Endothelial cell of umbilical vein (primary cell): ENCODE measurements at regions of chr14 and their contacts with region 1.

Region 1: GRCh38 chr14:74658537-74659130 is 46.6 kb upstream of the LTBP2 start:
- DNase-seq: peak; percentile 51
- H3K4me3 ChIP-seq: no peak overlapping the region
- H3K27ac ChIP-seq: peak overlapping the region; percentile 86
- H3K4me1 ChIP-seq: peaks cover 32% of the 10 kb centered on the region
- H3K27me3 ChIP-seq: no peaks in the 10 kb centered on the region
- CTCF ChIP-seq: no peak
- POLR2A ChIP-seq: no peak

Region 2: GRCh38 chr14:74333909-74334308 is 324.7 kb before region 1 on chr14:
- CTCF ChIA-PET with region 1: no interaction called
- POLR2A ChIA-PET with region 1: no interaction called
- dilution Hi-C with region 1: no loop called
- intact Hi-C with region 1: no loop called
- DNase-seq: no peak
- H3K4me3 ChIP-seq: no peak overlapping the region
- H3K27ac ChIP-seq: no peak overlapping the region
- H3K4me1 ChIP-seq: no peaks in the 10 kb centered on the region
- H3K27me3 ChIP-seq: peaks cover 7 to 9% of the 10 kb centered on the region in 2 experiments
- CTCF ChIP-seq: no peak
- POLR2A ChIP-seq: no peak

Region 3: DNA sequence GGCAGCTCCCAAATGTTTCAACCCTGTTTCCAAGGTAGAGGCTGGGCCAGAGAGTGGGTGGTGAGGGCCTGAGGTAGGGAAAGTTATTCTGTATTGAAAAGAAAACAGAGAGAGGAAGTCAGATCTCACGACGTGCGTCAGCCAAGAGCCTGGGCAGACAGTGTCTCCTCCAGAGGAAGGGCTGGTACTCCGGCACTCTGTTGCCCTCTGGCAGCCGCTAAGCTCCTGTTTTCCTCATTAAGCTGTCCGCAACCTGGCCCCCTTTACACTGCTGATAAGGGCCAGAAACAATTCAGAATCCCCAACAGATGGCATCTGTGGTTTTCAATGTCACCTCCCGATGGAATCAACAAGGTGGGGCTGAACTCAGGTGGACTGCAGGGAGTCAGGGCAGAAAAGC is 20.6 kb before region 1 on chr14:
- CTCF ChIA-PET with region 1: interaction called, 6 read pairs
- POLR2A ChIA-PET with region 1: no interaction called
- dilution Hi-C with region 1: no loop called
- intact Hi-C with region 1: loop called (anchors 2 kb)
- DNase-seq: peak; percentile 83
- H3K4me3 ChIP-seq: no peak overlapping the region
- H3K27ac ChIP-seq: peak overlapping the region; percentile 88
- H3K4me1 ChIP-seq: peaks cover 20% of the 10 kb centered on the region
- H3K27me3 ChIP-seq: no peaks in the 10 kb centered on the region
- CTCF ChIP-seq: peak; percentile 14 to 26
- POLR2A ChIP-seq: peak; percentile 35

Region 4: GRCh38 chr14:74647678-74648461 is 10.8 kb before region 1 on chr14:
- CTCF ChIA-PET with region 1: interaction called, 5 read pairs
- POLR2A ChIA-PET with region 1: interaction called, 5 read pairs
- dilution Hi-C with region 1: no loop called
- intact Hi-C with region 1: loop called (anchors 1 kb)
- DNase-seq: peak; percentile 29
- H3K4me3 ChIP-seq: no peak overlapping the region
- H3K27ac ChIP-seq: no peak overlapping the region
- H3K4me1 ChIP-seq: peaks cover 29% of the 10 kb centered on the region
- H3K27me3 ChIP-seq: no peaks in the 10 kb centered on the region
- CTCF ChIP-seq: no peak
- POLR2A ChIP-seq: no peak

Region 5: GRCh38 chr14:74671789-74672188 is 13.2 kb after region 1 on chr14:
- CTCF ChIA-PET with region 1: interaction called, 10 read pairs
- POLR2A ChIA-PET with region 1: interaction called, 7 read pairs
- dilution Hi-C with region 1: no loop called
- intact Hi-C with region 1: no loop called
- DNase-seq: peak; percentile 85
- H3K4me3 ChIP-seq: no peak overlapping the region
- H3K27ac ChIP-seq: peak overlapping the region; percentile 89
- H3K4me1 ChIP-seq: peaks cover 43% of the 10 kb centered on the region
- H3K27me3 ChIP-seq: no peaks in the 10 kb centered on the region
- CTCF ChIP-seq: no peak
- POLR2A ChIP-seq: no peak

Region 6: GRCh38 chr14:74684434-74684833 is 25.8 kb after region 1 on chr14:
- CTCF ChIA-PET with region 1: no interaction called
- POLR2A ChIA-PET with region 1: no interaction called
- dilution Hi-C with region 1: no loop called
- intact Hi-C with region 1: no loop called
- DNase-seq: no peak
- H3K4me3 ChIP-seq: no peak overlapping the region
- H3K27ac ChIP-seq: no peak overlapping the region
- H3K4me1 ChIP-seq: peaks cover 6% of the 10 kb centered on the region
- H3K27me3 ChIP-seq: no peaks in the 10 kb centered on the region
- CTCF ChIP-seq: no peak
- POLR2A ChIP-seq: no peak

Region 7: GRCh38 chr14:76121089-76121748 is 1462.6 kb after region 1 on chr14:
- CTCF ChIA-PET with region 1: no interaction called
- POLR2A ChIA-PET with region 1: no interaction called
- dilution Hi-C with region 1: no loop called
- intact Hi-C with region 1: no loop called
- DNase-seq: no peak
- H3K4me3 ChIP-seq: no peak overlapping the region
- H3K27ac ChIP-seq: no peak overlapping the region
- H3K4me1 ChIP-seq: no peaks in the 10 kb centered on the region
- H3K27me3 ChIP-seq: peaks cover 0 to 1% of the 10 kb centered on the region in 2 experiments
- CTCF ChIP-seq: no peak
- POLR2A ChIP-seq: no peak